ENCODE measurements at regions of chr16 and their contacts with region 1.

Region 1: DNA sequence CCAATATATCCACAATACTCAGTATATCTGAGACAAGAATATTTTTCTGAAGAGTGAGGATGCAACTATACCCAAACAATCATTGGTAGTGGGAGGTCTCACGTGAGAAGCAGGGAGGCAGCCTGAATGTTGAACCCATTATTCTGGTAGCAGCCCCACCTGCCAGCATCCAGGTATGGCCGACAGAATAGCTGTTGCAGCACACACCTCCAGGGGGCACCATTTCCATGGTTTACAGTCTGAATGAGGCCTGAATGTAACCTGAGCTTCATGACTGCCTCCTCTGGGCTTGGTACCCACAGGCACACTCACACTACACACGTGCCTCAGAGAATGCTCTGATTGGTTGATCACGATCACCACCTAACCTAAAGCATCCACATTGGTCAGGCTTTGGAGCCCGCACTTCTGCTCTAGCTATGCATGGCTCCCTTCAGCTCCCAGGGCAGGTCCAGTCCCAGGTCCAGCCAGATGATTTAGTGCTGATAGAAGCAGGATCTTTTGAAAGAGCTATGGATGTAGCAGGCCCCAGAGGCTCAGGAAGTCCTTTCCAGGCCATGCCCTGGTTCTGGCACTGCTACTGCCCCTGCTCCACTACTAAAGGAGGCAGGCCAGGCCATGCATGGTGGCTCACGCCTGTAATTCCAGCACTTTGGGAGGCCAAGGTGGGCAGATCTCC is 11.0 kb upstream of the CBFB start:
- DNase-seq: peak; percentile 83
- ATAC-seq: peak; percentile 83
- H3K4me3 Mint-ChIP-seq: no peak overlapping the region
- H3K27ac Mint-ChIP-seq: no peak overlapping the region
- H3K4me1 Mint-ChIP-seq: peaks cover 36% of the 10 kb centered on the region
- H3K27me3 Mint-ChIP-seq: peaks cover 6% of the 10 kb centered on the region

Region 2: DNA sequence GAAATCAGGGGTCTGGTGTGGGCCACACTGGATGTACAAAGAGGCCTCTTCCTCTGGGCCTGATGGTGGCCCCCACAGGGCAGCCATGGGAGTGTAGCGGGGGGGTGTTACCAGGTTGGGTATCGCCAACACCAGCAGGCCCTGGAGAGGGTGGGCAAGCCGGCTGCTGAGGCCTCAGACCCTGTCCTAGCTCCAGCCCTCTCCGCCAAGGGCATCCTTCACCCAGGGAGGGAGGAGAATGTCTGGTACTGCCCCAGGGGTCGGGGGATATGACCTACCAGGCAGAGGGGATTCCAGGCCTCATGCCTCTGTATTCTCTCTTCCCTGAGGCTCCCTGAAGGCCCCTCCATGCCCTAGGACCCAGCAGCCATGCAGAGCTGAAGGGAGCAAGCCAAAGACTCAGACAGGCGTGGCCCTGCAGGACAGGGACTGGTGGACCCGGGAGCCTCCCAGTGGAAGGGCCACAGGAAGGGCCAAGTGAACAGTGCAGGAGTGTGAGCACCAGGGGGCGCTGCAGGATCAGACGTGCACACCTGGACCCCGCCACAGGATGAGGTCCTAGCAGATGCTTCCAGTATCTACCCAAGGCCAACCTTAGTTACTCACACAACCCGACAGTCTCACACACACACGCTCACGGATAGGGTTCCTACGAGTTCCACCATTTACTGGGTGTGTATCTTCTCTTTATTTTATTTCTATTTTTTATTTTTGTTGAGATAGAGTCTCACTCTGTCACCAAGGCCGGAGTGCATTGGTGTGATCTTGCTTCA is 40.4 kb before region 1 on chr16:
- POLR2A ChIA-PET with region 1: interaction called, 38 read pairs
- DNase-seq: peak; percentile 93
- ATAC-seq: peak; percentile 98
- H3K4me3 Mint-ChIP-seq: no peak overlapping the region
- H3K27ac Mint-ChIP-seq: peak overlapping the region; percentile 86
- H3K4me1 Mint-ChIP-seq: peaks cover 49% of the 10 kb centered on the region
- H3K27me3 Mint-ChIP-seq: no peaks in the 10 kb centered on the region

Region 3: DNA sequence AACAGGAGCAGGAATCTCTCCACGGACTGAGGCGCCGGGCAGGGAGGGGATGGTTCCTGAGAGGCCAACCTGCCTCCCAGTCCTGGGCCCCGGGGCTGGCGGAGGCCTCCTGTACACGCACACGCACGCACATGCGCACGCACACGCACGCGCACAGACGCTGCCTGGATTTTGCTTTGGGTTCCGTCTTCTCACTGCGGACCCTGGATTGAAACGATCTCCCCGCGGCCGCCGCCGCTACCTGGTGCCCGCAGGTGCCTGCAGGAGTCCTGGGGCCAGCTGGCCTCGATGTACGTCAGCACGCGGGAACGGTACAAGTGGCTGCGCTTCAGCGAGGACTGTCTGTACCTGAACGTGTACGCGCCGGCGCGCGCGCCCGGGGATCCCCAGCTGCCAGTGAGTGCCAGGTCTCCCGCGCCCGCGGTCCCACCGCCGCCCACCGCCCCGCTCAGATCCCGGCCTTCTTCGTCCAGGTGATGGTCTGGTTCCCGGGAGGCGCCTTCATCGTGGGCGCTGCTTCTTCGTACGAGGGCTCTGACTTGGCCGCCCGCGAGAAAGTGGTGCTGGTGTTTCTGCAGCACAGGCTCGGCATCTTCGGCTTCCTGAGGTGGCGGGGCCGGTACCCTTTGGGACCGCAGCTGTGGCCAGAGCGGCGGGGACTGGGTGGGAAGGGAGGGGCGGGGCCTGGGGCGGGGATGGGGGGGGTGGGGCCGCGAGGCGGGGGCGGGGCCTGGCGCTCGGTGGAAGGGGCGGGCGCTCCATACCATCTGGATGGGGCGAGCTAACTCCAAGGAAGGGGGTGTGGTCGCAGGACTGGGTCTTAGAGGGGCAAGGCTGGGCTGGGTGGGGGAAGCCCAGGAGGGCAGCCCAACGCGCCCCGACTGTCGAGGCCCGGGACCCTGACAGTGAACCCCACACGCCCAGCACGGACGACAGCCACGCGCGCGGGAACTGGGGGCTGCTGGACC is 17.3 kb before region 1 on chr16:
- POLR2A ChIA-PET with region 1: interaction called, 46 read pairs
- DNase-seq: peak; percentile 77
- ATAC-seq: peak; percentile 65
- H3K4me3 Mint-ChIP-seq: peak overlapping the region; percentile 81
- H3K27ac Mint-ChIP-seq: peak overlapping the region; percentile 76
- H3K4me1 Mint-ChIP-seq: peaks cover 28% of the 10 kb centered on the region
- H3K27me3 Mint-ChIP-seq: peaks cover 5% of the 10 kb centered on the region

Region 4: DNA sequence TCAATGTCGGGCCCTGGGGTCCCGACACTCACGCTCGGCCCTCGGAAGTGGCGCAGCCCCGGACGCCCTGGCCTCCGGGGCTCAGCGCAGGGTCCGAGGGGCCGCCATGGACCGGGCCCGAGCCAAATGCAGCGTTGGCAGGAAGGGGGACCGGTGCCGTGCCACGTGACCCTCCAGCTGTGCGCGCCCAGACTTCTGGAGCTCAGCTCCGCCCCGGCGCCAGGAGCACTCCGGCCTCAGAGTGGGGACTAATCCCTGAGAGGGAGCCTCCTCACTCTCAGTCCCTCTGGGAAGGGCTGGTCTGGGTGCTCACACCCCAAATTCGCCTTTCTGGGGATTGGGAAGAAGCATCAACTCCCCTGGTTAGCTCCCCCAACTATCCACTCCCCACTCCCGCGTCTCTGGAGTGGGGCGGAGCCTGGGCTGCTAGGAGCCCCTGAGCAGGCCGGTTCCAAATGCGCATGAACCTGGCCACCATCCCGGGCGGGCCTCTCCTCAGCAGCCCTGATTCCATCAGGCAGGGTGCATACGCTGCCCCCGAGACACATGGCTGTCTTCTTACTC is 133.0 kb after region 1 on chr16 and contains the start of gene B3GNT9:
- POLR2A ChIA-PET with region 1: interaction called, 31 read pairs
- DNase-seq: peak; percentile 70
- ATAC-seq: peak; percentile 51
- H3K4me3 Mint-ChIP-seq: peak within 1 kb of the TSS; percentile 74
- H3K27ac Mint-ChIP-seq: peak within 1 kb of the TSS; percentile 45
- H3K4me1 Mint-ChIP-seq: peaks cover 31% of the 10 kb centered on the region
- H3K27me3 Mint-ChIP-seq: peaks cover 5% of the 10 kb centered on the region
- total RNA-seq, gene B3GNT9: 9.0 to 10.1 TPM

Region 5: GRCh38 chr16:67246934-67247697 is 229.2 kb after region 1 on chr16 and contains the start of gene FHOD1:
- POLR2A ChIA-PET with region 1: interaction called, 10 read pairs
- DNase-seq: peak; percentile 100
- ATAC-seq: peak; percentile 66
- H3K4me3 Mint-ChIP-seq: peak within 1 kb of the TSS; percentile 82
- H3K27ac Mint-ChIP-seq: peak within 1 kb of the TSS; percentile 90
- H3K4me1 Mint-ChIP-seq: peaks cover 43% of the 10 kb centered on the region
- H3K27me3 Mint-ChIP-seq: peaks cover 13% of the 10 kb centered on the region
- total RNA-seq, gene FHOD1: 92.2 to 92.8 TPM